ENCODE measurements at regions of chr10 and their contacts with region 1.

Region 1: DNA sequence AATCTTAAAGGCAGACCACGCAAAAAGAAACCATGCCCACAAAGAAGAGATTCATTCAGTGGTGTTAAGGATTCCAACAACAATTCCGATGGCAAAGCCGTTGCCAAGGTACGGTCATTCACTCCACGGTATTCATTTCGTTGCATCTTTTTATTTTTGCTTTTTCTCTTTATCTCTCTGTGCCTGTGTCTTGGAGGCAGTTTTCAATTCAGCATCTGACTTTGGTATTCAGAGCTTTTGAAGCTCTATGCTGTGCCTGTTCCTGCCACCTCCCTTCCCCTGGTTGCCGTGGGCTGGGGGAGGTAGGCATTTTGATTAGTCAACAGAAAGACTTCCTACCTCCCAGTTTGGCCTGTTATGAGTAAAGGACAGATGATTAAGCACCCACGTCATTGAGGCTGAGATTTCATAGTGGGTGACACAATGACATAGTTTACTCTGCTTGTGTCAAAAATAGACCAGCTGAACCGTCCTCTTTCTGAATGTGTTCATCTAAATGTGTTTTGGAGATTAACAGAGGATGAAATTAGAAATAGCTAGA is 149.5 kb downstream of the ARID5B start:
- DNase-seq: peak; percentile 91
- H3K4me3 Mint-ChIP-seq: peak overlapping the region; percentile 94
- H3K27ac Mint-ChIP-seq: peak overlapping the region; percentile 100
- H3K4me1 Mint-ChIP-seq: peaks cover 87% of the 10 kb centered on the region
- H3K27me3 Mint-ChIP-seq: no peaks in the 10 kb centered on the region

Region 2: GRCh38 chr10:61903221-61903927 is 147.6 kb before region 1 on chr10:
- CTCF ChIA-PET with region 1: interaction called, 11 read pairs
- intact Hi-C with region 1: loop called (anchors 1 kb)
- DNase-seq: peak; percentile 74
- H3K4me3 Mint-ChIP-seq: peak overlapping the region; percentile 99
- H3K27ac Mint-ChIP-seq: peak overlapping the region; percentile 100
- H3K4me1 Mint-ChIP-seq: peaks cover 42% of the 10 kb centered on the region
- H3K27me3 Mint-ChIP-seq: no peaks in the 10 kb centered on the region

Region 3: GRCh38 chr10:61992671-61993668 is 58.0 kb before region 1 on chr10:
- CTCF ChIA-PET with region 1: interaction called, 8 read pairs
- intact Hi-C with region 1: loop called (anchors 1 kb)
- DNase-seq: peak; percentile 84
- H3K4me3 Mint-ChIP-seq: peak overlapping the region; percentile 47
- H3K27ac Mint-ChIP-seq: peak overlapping the region; percentile 96
- H3K4me1 Mint-ChIP-seq: peaks cover 85% of the 10 kb centered on the region
- H3K27me3 Mint-ChIP-seq: no peaks in the 10 kb centered on the region

Region 4: GRCh38 chr10:62062752-62063512 is 12.0 kb after region 1 on chr10:
- CTCF ChIA-PET with region 1: interaction called, 3 read pairs
- intact Hi-C with region 1: loop called (anchors 1 kb)
- DNase-seq: no peak
- H3K4me3 Mint-ChIP-seq: peak overlapping the region; percentile 34
- H3K27ac Mint-ChIP-seq: peak overlapping the region; percentile 90
- H3K4me1 Mint-ChIP-seq: peaks cover 86% of the 10 kb centered on the region
- H3K27me3 Mint-ChIP-seq: no peaks in the 10 kb centered on the region

Region 5: DNA sequence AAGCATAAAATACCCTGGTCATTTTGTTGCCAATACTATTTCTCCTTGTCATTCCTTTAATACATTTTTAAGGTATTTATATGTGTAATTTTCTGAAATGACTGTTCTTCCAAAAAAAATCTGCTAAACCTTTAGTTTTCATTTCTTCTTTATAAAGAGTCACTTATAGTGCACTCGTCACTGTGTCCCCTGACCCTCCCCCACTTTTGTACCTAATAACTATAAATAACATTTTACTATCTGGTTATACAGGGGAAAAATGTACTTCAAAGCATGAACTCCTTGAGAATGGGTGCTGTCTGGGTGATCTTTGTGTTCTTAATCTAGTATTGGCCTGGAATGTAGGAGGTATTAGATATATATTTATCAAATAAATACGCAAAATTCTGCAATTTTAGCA is 186.5 kb after region 1 on chr10:
- CTCF ChIA-PET with region 1: no interaction called
- intact Hi-C with region 1: no loop called
- DNase-seq: no peak
- H3K4me3 Mint-ChIP-seq: no peak overlapping the region
- H3K27ac Mint-ChIP-seq: peak overlapping the region; percentile 24
- H3K4me1 Mint-ChIP-seq: peaks cover 34% of the 10 kb centered on the region
- H3K27me3 Mint-ChIP-seq: no peaks in the 10 kb centered on the region

Region 6: GRCh38 chr10:62352356-62352970 is 301.5 kb after region 1 on chr10:
- CTCF ChIA-PET with region 1: no interaction called
- intact Hi-C with region 1: loop called (anchors 5 kb)
- DNase-seq: peak; percentile 46
- H3K4me3 Mint-ChIP-seq: no peak overlapping the region
- H3K27ac Mint-ChIP-seq: no peak overlapping the region
- H3K4me1 Mint-ChIP-seq: peaks cover 19% of the 10 kb centered on the region
- H3K27me3 Mint-ChIP-seq: peaks cover 6% of the 10 kb centered on the region

Region 7: DNA sequence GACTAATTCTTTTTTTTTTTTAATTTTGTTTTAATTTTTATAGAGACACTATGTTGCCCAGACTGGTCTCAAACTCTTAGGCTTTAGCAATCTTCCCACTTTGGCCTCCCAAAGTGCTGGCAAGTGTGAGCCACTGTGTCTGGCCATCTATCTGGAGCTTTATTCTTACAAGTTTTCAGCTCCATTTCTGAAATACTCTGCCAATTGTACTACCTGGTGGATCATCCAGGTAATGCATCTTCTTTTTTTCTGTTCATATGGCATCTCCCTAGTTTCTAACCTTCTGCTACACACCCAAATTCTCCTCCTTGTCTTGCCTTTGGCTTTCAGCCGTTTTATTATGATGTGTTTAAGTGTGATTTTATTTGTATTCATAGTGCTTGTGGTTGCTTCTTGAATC is 363.4 kb after region 1 on chr10:
- CTCF ChIA-PET with region 1: no interaction called
- intact Hi-C with region 1: no loop called
- DNase-seq: no peak
- H3K4me3 Mint-ChIP-seq: no peak overlapping the region
- H3K27ac Mint-ChIP-seq: no peak overlapping the region
- H3K4me1 Mint-ChIP-seq: no peaks in the 10 kb centered on the region
- H3K27me3 Mint-ChIP-seq: peaks cover 27% of the 10 kb centered on the region

Region 8: GRCh38 chr10:63133056-63133820 is 1082.3 kb after region 1 on chr10 and contains the start of gene NRBF2:
- CTCF ChIA-PET with region 1: no interaction called
- intact Hi-C with region 1: loop called (anchors 10 kb)
- DNase-seq: peak; percentile 98
- H3K4me3 Mint-ChIP-seq: peak within 1 kb of the TSS; percentile 89
- H3K27ac Mint-ChIP-seq: peak within 1 kb of the TSS; percentile 92
- H3K4me1 Mint-ChIP-seq: peaks cover 38% of the 10 kb centered on the region
- H3K27me3 Mint-ChIP-seq: no peaks in the 10 kb centered on the region
- total RNA-seq, gene NRBF2: 15.4 to 15.6 TPM

Measured in activated naive CD4-positive, alpha-beta T cell treated with anti-CD3 and anti-CD28 coated beads for 36 hours (primary cell).